Left ventricle myocardium superior (tissue), 1 donor: ENCODE measurements at regions of chr1 and their contacts with region 1.

Region 1: GRCh38 chr1:162056043-162056442 is 13.4 kb upstream of the NOS1AP start:
- DNase-seq: peak; percentile 51
- ATAC-seq: peak; percentile 95

Region 2: GRCh38 chr1:162276493-162276892 is 220.4 kb after region 1 on chr1:
- intact Hi-C with region 1: loop called (anchors 5 kb)
- DNase-seq: no peak
- ATAC-seq: peak; percentile 18

Region 3: DNA sequence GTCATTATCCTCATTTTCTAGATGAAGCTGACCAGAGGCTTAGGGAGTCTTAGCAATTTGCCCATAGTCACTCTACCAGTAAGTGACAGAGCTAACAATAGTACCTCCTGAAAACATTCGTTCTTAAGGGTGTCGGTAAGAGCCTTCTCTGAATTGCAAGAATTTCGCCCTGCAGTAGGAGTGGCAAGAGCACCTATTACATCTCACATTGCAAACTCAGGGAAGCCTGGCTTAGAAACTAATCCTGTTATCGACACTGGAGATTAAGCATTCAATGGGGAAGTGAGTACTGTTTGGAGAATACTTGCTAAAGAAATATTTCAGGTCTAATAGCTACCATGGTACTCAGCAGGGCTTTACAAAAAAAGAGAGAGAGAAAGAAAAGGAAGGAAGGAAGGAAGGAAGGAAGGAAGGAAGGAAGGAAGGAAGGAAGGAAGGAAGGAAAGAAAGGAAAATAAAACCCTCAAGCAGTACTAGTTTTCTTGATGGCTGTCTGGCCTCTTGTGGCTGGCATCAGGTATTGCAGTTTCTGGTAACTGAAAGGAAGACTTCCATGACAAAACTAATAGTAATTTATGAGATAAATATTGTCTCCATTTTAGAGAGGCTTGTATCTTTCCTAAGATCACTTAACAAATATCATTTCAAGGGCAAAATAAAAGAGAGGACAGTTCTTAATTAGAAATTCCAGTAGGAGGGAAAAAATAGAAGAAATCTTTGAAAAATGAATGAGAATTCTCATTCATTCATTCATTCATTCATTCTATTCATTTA is 335.9 kb after region 1 on chr1:
- intact Hi-C with region 1: loop called (anchors 5 kb)
- DNase-seq: no peak
- ATAC-seq: peak; percentile 41